ENCODE measurements at regions of chr13 and their contacts with region 1.

Region 1: GRCh38 chr13:111270765-111271698 is 49.4 kb upstream of the TEX29 start:
- DNase-seq: no peak
- H3K4me3 ChIP-seq: no peak overlapping the region
- H3K27ac ChIP-seq: no peak overlapping the region
- H3K4me1 ChIP-seq: peaks cover 0 to 7% (median 0%) of the 10 kb centered on the region in 4 donors
- H3K27me3 ChIP-seq: no peaks in the 10 kb centered on the region
- CTCF ChIP-seq: no peak
- EP300 ChIP-seq: no peak
- POLR2A ChIP-seq: no peak

Region 2: DNA sequence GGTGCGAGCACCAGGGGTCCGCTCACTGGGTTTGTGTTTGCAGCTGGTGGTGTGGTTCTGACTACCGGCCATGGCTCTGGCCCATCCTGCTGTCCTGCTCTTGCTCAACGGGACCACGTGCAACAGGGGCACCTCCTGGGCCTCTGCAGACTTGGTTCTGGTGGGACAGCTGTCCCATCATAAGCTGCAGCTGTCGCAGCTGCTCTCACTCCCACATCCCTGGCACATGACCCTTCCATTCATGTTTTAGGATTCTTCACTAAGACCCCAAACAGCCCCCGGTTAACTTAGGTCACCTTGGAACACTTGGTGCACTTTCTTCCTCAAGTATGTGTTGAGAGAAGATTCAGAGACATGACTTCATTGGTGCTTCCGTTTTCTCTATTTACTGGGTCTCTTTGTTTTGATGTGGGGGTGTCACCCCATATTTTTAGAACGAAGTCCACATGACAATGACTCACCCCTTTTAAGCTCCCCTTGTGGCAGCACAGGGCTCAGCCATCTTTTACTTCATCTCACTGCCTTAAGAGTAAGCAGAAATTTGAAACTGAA is 224.4 kb before region 1 on chr13:
- in situ Hi-C with region 1: no loop called
- intact Hi-C with region 1: no loop called
- DNase-seq: no peak
- H3K4me3 ChIP-seq: no peak overlapping the region
- H3K27ac ChIP-seq: peak overlapping the region in 1 of 4 donors; percentile 28
- H3K4me1 ChIP-seq: peaks cover 0 to 3% (median 2%) of the 10 kb centered on the region in 4 donors
- H3K27me3 ChIP-seq: no peaks in the 10 kb centered on the region
- CTCF ChIP-seq: peak in 3 of 5 experiments; percentile 15 to 19 (median 17)
- EP300 ChIP-seq: no peak
- POLR2A ChIP-seq: no peak

Region 3: DNA sequence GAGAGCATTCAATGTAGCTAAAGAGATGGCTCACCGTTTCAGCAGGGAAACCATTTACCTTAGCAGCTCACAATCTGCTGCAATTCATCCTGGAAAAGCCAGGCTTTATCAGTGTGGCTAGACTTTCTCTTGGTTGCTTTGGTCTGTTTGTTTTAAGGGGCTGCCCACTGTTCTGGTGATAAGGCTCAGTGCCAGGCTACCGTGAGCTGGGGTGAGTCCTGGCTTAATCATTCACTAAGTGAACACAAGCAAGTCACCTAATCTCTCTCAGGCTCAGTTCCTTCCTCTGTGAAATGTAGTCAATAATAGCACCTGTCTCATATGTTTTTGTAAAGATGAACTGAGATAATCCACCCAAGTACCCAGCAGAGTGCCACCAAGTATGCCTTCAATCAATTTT is 278.4 kb after region 1 on chr13:
- in situ Hi-C with region 1: no loop called
- intact Hi-C with region 1: no loop called
- DNase-seq: no peak
- H3K4me3 ChIP-seq: no peak overlapping the region
- H3K27ac ChIP-seq: no peak overlapping the region
- H3K4me1 ChIP-seq: no peaks in the 10 kb centered on the region
- H3K27me3 ChIP-seq: no peaks in the 10 kb centered on the region
- CTCF ChIP-seq: no peak
- EP300 ChIP-seq: no peak
- POLR2A ChIP-seq: no peak

Region 4: DNA sequence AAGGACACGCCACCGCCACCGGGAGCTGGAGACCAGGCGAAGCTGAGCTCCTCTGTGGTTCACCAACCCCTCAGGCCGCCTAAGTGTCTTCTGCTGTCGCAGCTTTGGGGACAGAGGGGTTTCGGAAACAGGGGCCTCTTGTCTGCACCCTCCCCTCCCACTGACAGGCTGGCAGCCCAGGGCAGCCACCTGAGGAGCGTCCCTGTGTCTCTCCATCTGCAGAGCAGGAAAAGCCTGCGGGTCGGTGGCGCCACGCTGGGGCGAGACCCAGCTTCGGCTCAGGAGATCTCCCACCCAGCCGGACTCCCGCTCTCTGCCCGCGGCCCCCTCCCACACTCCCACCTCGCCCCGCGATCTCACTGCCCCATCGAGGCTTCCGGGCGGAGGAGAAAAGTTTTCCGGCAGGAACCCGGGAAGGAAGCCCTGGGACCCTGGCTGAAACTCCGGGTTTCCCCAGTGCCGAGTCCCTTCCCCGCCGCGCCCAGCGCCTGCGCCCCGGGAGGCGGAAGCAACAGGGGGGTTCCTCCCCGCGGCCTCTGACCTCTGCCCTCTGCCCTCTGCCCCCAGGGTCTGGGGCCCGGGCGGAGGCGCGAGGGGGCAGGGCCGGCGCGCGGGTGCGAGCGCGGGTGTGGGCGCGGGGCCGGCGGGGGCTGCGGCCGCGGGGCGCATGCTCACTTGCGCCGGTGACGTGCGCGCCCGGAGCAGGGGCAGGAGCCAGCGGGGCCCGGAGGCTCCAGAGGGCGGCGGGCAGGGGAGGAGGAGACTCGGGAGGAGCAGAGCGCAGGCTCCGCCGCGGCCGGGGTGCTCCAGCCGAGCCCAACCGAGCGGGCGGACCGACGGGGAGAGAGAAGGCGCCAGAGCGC is 1418.5 kb after region 1 on chr13 and contains the start of gene ATP11A:
- in situ Hi-C with region 1: no loop called
- intact Hi-C with region 1: loop called (anchors 10 kb)
- DNase-seq: peak; percentile 91
- H3K4me3 ChIP-seq: peak within 1 kb of the TSS; percentile 80 to 88 (median 82)
- H3K27ac ChIP-seq: peak within 1 kb of the TSS; percentile 88 to 95 (median 90)
- H3K4me1 ChIP-seq: peaks cover 6 to 37% (median 19%) of the 10 kb centered on the region in 4 donors
- H3K27me3 ChIP-seq: no peaks in the 10 kb centered on the region
- CTCF ChIP-seq: no peak
- EP300 ChIP-seq: no peak
- POLR2A ChIP-seq: peak; percentile 46
- total RNA-seq, gene ATP11A: 10.2 to 17.5 (median 13.3) TPM

Measured in transverse colon (tissue), 4 donors.